Activated CD4-positive, alpha-beta memory T cell treated with anti-CD3 and anti-CD28 coated beads, Interleukin-2, amount 10 ng/mL, durations not matched to agents 7 days and 5 days (primary cell): ENCODE measurements at regions of chr7 and their contacts with region 1.

Region 1: DNA sequence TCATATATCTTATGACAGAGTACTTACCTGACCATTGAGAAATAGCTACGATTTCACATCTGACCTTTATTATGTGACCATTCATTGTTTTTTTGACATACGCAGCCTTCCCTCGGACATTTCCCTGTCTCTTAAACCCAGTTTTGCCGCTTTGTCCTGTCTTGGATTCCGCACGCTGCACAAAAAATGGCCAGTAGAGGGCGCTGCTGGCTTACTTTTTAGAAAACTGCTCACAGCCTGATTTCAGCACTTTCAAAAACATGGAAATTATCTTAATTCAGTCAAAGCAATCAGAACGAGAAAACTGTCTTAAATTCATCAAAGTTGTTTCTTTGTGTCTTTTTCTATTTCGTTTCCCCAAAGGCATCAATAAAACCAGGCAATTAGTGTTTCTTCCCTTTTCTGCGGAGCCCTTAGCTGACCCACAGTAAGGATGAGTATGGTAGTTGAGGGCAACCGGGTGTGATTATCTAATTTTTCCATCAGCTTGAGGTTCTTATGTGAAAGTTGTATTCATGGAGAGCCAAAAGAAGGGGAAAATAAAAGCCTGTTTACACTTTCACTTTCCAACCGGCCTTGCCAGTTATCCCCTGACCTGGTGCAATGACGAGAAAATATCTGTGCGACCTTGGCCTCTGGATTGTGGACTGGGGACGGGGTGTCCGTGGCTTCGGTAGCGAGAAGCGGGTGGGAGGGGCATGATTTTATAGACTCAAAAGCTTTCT is 144.4 kb downstream of the DYNC1I1 start:
- DNase-seq: peak; percentile 75
- H3K4me3 Mint-ChIP-seq: no peak overlapping the region
- H3K27ac Mint-ChIP-seq: no peak overlapping the region
- H3K4me1 Mint-ChIP-seq: peaks cover 10% of the 10 kb centered on the region
- H3K27me3 Mint-ChIP-seq: peaks cover 17% of the 10 kb centered on the region

Region 2: GRCh38 chr7:95931460-95932232 is 14.9 kb after region 1 on chr7:
- CTCF ChIA-PET with region 1: no interaction called
- POLR2A ChIA-PET with region 1: no interaction called
- DNase-seq: no peak
- H3K4me3 Mint-ChIP-seq: no peak overlapping the region
- H3K27ac Mint-ChIP-seq: no peak overlapping the region
- H3K4me1 Mint-ChIP-seq: no peaks in the 10 kb centered on the region
- H3K27me3 Mint-ChIP-seq: peaks cover 5% of the 10 kb centered on the region

Region 3: DNA sequence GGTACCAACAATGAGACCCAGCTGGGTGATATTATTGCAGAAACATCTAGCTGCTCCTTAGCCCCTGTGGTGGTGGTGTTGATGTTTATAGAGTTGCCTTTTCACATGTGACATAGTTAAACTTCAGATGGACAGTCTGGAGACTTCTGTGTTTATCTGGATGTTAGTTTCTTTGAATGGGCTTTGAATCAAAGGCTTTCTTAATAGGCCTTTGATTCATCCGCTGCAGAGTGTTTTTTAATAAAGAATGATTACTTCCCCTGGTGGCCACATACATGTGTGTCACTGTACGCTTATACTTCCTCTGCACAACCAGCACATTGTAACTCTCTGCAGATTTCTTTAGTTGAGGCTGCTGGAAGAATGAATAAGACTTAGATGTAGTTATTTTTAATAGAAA is 76.6 kb after region 1 on chr7:
- CTCF ChIA-PET with region 1: no interaction called
- POLR2A ChIA-PET with region 1: no interaction called
- DNase-seq: no peak
- H3K4me3 Mint-ChIP-seq: no peak overlapping the region
- H3K27ac Mint-ChIP-seq: no peak overlapping the region
- H3K4me1 Mint-ChIP-seq: no peaks in the 10 kb centered on the region
- H3K27me3 Mint-ChIP-seq: peaks cover 6% of the 10 kb centered on the region

Region 4: DNA sequence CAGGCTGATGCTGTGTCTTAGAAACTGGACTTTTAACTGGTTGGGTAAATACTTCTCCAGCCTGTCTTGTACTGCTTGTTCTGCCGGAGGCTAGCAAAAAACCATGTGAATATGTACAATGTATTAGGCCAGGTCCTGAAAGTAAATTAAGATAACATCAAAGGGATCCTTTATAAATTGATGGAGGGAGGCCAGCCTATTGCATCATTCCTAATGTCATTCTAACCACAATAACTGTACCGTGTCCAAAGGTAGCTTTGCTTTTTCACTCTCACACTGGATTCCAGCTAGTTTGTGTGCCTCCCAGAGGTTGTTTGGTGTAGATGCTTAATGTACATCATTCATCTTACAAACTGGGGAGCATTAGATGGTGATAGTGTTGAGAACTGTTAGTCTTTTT is 884.1 kb after region 1 on chr7:
- CTCF ChIA-PET with region 1: no interaction called
- POLR2A ChIA-PET with region 1: no interaction called
- DNase-seq: no peak
- H3K4me3 Mint-ChIP-seq: no peak overlapping the region
- H3K27ac Mint-ChIP-seq: no peak overlapping the region
- H3K4me1 Mint-ChIP-seq: no peaks in the 10 kb centered on the region
- H3K27me3 Mint-ChIP-seq: peaks cover 16% of the 10 kb centered on the region

Region 5: DNA sequence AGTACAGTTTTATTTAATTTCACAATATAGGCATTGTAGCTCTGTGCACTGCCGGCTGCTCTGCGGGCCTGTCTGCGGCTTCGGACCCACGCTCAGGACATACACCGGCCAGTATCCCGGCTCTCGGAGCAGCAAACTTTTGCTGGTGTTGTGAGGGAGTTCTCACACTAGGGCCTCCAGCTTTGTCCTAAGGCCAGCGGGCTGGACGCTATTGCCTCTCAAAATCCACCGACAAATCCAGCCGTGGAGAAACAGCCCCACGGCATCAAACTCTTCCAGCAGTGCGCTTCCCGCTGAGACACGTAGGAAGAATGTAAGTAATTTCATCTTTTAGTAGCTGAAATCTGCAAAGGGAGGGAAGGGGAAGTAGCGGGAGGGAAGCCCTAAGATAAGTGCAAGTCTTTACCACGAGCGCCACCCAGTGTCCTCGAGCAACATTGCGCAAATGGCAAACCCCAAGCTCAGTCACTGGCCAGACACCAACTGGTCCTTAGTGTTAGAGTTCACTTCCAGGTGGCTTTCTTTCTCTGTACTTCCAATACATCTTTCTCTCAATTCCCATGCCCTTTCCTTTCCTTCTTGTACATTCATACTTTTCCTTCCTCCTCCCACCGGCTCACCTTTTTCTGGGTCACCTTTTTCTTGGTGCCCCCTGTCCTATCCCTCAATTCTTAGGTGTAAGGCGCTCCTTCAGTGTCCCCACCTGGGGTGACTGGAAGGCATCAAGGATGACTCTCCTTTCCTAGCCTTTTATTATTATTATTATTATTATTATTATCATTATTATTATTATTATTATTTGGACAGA is 1110.9 kb after region 1 on chr7:
- CTCF ChIA-PET with region 1: interaction called, 34 read pairs
- POLR2A ChIA-PET with region 1: no interaction called
- DNase-seq: peak; percentile 67
- H3K4me3 Mint-ChIP-seq: peak overlapping the region; percentile 17
- H3K27ac Mint-ChIP-seq: no peak overlapping the region
- H3K4me1 Mint-ChIP-seq: peaks cover 17% of the 10 kb centered on the region
- H3K27me3 Mint-ChIP-seq: peaks cover 59% of the 10 kb centered on the region

Region 6: DNA sequence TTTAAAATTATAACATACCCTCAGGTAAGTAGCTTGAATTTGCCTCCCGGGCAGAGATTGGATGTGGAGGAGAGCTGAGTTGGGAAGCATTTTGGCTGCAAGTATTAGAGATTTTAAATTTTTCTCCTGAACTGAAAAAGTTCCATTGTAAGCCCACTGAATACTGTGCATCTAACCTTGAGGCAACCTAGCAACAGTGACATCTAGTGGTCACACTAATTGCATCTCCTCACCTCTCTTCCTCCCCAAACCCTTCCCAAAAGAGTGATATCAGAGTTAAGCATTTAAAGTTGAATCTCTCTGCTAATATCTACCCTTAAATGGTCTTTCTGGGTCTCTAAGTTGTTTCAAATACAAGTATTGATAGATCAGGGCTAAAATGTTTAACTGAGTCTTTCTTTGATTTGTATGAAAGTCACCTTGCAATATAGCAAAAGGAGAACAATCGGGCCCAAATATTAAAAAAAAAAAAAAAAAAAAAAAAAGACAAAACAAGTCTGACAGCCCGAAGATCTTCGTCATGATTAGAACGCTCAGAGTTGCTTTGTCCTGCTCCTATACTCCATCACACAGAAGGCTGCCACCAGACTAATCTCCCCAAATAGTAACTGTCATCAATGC is 1148.3 kb after region 1 on chr7:
- CTCF ChIA-PET with region 1: interaction called, 11 read pairs
- POLR2A ChIA-PET with region 1: no interaction called
- DNase-seq: no peak
- H3K4me3 Mint-ChIP-seq: no peak overlapping the region
- H3K27ac Mint-ChIP-seq: no peak overlapping the region
- H3K4me1 Mint-ChIP-seq: no peaks in the 10 kb centered on the region
- H3K27me3 Mint-ChIP-seq: peaks cover 10% of the 10 kb centered on the region